Activated B cell treated with CpG ODN at 0.5 μM for 24 hours (primary cell): ENCODE measurements at regions of chr10 and their contacts with region 1.

Region 1: DNA sequence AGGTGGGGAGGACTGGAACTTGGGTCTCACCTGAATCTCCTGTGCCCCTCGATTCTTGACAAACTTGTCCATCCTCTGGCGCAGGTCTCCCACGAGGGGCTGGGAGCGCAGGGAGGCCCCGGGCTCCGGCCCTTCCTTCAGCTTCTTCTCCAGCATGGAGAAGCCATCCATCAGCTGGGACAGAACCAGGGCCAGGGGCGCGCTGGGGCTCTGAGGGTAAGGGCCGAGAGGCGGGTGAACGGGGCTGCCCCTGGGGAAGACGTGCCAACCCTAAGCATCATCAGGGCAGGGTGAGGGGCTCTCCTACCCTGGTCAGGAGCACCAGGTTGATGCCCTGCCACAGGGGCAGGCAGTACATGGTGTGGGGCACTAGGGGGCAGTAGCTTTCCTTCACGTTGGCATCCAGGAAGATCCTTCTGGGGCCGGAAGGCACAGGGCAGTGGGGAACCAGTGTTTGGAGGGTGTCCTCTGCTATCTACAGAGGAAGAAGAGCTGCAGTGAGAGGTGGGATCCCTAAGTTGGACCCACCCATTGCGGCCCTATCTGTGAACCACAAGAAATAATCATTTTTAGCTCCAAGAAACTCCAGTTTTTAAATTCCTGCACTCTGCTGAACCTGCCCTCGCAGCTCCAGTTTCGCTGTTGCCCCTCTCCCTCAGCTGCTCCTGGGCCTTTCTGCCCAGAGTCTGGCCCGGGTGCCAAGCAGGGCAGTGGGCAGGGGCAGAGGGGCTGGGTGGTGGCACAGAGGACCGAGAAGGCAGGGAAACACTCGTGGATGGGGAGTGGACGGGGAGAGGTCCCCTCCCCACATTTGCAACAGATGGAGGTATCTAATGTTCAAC is 10.8 kb upstream of the PYROXD2 start:
- DNase-seq: no peak
- ATAC-seq: peak; percentile 85
- H3K4me3 Mint-ChIP-seq: no peak overlapping the region
- H3K27ac Mint-ChIP-seq: no peak overlapping the region
- H3K4me1 Mint-ChIP-seq: peaks cover 6% of the 10 kb centered on the region
- H3K27me3 Mint-ChIP-seq: no peaks in the 10 kb centered on the region
- CTCF ChIP-seq: no peak

Region 2: DNA sequence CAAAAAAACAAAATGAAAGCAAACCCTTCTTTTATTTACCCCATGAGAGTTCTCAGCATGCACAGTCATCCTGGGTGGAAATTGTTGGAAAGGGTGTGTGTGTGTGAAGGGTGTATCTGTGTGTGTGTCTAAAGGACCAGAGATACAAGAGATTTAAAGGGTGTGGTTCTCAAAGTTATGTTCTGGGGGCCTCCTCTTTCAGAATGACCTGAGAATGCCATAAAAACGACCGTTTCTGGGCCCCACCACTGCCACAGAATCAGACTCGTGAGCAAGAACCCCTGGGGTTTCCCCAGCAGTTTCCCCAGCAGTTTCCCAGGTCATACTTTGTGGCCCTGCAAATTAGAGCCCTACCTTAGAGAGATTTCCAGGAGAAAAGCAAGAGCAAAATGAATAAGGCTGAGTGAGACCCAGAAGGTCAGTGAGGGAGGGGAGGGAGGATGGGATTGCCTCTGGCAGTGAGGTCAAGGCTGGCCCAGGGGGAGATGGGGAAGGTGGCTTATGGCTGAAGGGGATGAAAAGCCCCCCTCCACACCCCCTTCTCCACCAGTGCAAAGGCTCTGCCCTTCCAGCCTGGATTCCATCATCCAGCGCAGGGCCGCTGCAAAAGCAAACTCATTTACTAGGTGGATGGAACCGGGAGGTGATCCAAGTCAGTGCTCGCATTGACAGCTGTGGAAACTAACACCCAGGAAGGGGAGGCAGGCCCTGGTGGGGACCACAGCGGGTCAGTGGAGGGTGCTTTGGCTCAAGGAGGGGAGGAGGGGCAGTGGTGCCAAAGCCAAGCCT is 21.0 kb before region 1 on chr10:
- CTCF ChIA-PET with region 1: interaction called, 3 read pairs
- POLR2A ChIA-PET with region 1: interaction called, 10 read pairs
- intact Hi-C with region 1: no loop called
- DNase-seq: no peak
- ATAC-seq: peak; percentile 31
- H3K4me3 Mint-ChIP-seq: no peak overlapping the region
- H3K27ac Mint-ChIP-seq: peak overlapping the region; percentile 41
- H3K4me1 Mint-ChIP-seq: peaks cover 4% of the 10 kb centered on the region
- H3K27me3 Mint-ChIP-seq: no peaks in the 10 kb centered on the region
- CTCF ChIP-seq: no peak

Region 3: DNA sequence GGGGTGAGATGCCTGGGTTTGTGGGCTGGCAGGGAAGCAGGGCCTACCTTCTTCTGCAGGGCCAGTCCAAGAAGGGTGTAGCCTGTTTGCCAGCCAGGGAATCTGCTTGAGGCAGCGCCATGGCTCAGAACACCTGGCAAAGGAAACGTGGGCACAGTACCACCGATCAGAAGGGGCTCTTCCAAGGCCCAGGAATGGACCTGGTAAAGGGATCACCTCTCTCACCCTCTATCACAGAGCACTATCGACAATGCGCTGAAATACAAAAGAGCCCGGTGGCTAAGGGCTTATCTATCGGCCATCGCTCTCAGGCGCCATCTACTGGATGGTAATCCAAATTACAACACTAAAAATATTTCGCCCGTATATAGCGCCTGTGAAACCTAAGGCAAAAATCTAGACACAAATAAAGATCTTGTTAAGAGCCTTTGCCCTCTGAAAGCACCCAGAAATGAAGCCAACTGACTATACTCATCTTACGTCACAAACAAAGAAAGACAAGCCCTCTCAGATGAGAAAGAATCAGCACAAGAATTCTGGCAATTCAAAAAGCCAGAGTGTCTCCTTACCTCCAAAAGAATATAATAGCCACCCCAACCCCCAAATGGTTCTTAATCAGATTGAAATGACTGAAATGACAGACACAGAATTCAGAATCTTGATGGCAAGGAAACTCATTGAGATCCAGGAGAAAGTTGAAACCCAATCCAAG is 238.8 kb after region 1 on chr10:
- CTCF ChIA-PET with region 1: no interaction called
- POLR2A ChIA-PET with region 1: no interaction called
- intact Hi-C with region 1: loop called (anchors 1 kb)
- DNase-seq: no peak
- ATAC-seq: peak; percentile 49
- H3K4me3 Mint-ChIP-seq: no peak overlapping the region
- H3K27ac Mint-ChIP-seq: no peak overlapping the region
- H3K4me1 Mint-ChIP-seq: no peaks in the 10 kb centered on the region
- H3K27me3 Mint-ChIP-seq: peaks cover 22% of the 10 kb centered on the region
- CTCF ChIP-seq: no peak